Activated CD4-positive, alpha-beta T cell treated with anti-CD3 and anti-CD28 coated beads, Interleukin-2, amount 10 ng/mL, durations not matched to agents 24 days and 14 days (primary cell): ENCODE measurements at regions of chr2 and their contacts with region 1.

Region 1: GRCh38 chr2:224927646-224928173 is 114.6 kb downstream of the DOCK10 start:
- DNase-seq: peak; percentile 91
- H3K4me3 Mint-ChIP-seq: peak overlapping the region; percentile 67
- H3K27ac Mint-ChIP-seq: peak overlapping the region; percentile 100
- H3K4me1 Mint-ChIP-seq: peaks cover 85% of the 10 kb centered on the region
- H3K27me3 Mint-ChIP-seq: no peaks in the 10 kb centered on the region

Region 2: DNA sequence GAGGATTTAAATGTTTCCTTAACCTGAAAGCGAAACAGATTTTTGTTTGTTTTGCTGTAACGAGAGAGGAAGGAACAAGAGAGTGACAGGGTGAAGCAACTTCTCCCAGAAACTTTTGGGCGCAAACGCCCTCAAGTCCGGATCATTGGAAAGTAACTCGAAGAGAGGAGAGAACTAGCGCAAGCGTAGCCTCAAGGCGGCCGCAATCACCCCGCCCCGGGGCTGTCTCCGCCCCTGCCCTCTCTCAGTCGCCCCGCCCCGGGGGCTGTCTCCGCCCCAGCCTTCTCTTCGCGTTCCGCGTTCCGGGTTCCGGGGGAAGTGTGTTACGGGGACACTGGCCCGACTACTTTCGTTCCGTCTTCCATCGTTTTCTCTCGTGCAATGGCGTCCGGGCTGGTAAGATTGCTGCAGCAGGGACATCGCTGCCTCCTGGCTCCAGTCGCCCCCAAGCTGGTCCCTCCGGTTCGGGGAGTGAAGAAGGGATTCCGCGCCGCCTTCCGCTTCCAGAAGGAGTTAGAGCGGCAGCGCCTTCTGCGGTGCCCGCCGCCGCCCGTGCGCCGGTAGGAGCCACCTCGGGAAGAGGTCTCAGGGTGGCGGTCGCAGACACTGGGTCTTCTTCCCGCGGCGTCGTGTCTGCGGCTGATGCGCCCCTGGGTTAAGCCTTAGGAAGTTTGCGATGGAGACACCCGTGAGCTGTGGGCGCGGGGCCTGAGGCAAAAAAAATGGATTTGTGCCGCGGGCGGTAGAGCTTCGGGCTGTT is 970.4 kb before region 1 on chr2 and contains the start of gene MRPL44:
- intact Hi-C with region 1: loop called (anchors 5 kb)
- DNase-seq: peak; percentile 100
- H3K4me3 Mint-ChIP-seq: peak within 1 kb of the TSS; percentile 95
- H3K27ac Mint-ChIP-seq: peak within 1 kb of the TSS; percentile 95
- H3K4me1 Mint-ChIP-seq: peaks cover 62% of the 10 kb centered on the region
- H3K27me3 Mint-ChIP-seq: no peaks in the 10 kb centered on the region
- total RNA-seq, gene MRPL44: 37.3 and 37.4 TPM in 2 replicates

Region 3: DNA sequence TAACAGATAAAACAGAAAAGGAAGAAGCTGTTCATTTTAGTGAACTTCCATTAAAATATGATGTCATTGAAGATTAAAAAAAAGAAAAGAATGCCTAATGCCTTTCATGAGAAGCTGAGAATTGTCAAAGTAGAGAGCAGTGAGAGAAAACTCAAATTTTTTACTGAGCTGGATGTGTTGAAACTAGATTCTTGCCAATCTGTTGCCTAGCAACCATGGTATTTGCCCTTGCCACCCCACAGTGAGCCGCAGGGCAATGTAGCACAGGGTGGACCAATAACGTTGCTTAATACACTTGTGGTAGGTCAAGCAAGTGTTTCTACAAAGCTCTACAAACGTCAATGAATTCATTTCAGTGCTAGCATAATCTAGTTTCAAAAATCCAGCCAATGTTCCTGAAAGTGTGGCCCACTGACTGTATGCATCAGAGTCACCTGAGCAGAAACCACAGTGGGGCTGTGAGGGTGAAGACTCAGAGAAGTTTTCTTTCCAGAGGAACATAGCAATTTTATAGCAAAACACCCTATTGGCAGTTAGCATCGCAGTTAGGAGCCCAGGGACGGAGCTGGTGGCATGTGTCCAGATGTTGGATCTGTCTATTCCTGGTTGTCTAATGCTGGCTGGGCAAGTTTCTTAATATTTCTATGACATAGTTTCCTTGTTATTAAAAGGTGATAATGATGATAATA is 17.7 kb before region 1 on chr2:
- intact Hi-C with region 1: loop called (anchors 1 kb)
- DNase-seq: peak; percentile 58
- H3K4me3 Mint-ChIP-seq: no peak overlapping the region
- H3K27ac Mint-ChIP-seq: peak overlapping the region; percentile 80
- H3K4me1 Mint-ChIP-seq: peaks cover 46% of the 10 kb centered on the region
- H3K27me3 Mint-ChIP-seq: no peaks in the 10 kb centered on the region

Region 4: GRCh38 chr2:224946895-224947294 is 19.2 kb after region 1 on chr2:
- intact Hi-C with region 1: loop called (anchors 1 kb)
- DNase-seq: peak; percentile 79
- H3K4me3 Mint-ChIP-seq: peak overlapping the region; percentile 82
- H3K27ac Mint-ChIP-seq: peak overlapping the region; percentile 84
- H3K4me1 Mint-ChIP-seq: peaks cover 60% of the 10 kb centered on the region
- H3K27me3 Mint-ChIP-seq: no peaks in the 10 kb centered on the region

Region 5: DNA sequence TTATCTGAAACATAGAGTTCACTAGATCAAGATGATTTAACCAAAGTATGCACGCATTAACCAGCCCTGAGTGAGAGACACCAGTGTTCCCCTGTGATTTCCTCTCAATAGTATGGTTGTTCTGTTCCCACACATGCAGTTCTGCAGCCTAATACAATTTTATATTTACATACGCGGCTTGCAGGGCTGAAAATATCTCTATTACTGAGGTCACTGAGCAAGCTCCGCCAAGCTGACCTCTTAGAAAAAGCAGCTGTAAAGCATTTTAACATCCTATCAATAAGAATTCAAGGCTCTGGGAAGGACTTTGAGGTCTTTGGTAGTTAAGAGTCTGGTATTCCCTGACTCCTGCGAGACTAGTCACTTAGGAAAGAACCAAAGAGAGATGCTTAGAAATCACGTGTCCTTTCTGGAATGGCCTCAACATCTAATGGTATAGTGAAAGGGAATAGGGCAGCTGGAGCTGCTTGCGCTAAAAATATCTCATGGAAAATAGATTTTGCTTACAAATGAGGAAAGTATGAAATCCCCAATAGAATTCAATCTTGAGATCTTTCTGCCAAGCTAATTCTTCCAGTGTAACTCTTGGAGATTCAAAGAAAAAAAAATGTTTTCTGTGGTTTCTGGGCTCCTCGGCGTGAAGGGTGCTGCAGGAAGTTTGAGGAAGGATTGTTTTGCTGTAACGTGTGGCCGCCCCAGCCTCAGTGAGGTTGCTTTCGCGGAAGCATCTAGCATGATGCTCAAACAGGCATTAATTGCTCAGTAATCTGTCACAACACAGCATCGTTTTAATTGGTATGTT is 55.4 kb after region 1 on chr2:
- intact Hi-C with region 1: loop called (anchors 2 kb)
- DNase-seq: peak; percentile 86
- H3K4me3 Mint-ChIP-seq: peak overlapping the region; percentile 67
- H3K27ac Mint-ChIP-seq: peak overlapping the region; percentile 85
- H3K4me1 Mint-ChIP-seq: peaks cover 70% of the 10 kb centered on the region
- H3K27me3 Mint-ChIP-seq: no peaks in the 10 kb centered on the region

Region 6: DNA sequence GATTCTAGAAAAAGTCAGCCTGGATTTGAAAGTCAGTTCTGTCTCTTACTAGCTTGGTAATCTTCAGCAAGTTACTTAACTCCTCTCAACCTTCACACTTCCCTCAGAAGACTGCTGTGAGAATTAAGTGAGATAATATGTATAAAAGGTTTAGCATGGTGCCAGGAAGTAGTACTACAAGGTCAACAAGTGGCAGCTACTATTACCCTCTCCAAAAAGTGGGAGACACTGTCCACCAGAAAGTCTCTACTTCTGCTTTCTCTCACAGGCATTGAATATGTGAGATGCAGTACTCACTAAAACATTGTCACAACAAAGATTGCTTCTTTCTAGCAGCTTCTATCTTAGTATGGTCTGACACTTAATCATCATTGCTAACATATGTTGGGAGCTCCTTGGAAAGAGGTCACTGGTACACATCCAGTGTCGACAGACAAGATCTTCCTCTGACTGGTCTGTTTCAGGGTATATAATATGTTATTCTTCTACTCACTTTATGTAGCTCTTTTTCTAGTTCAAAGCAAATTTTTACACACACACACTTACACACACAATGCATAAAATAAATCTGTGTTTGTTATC is 66.6 kb after region 1 on chr2:
- intact Hi-C with region 1: no loop called
- DNase-seq: no peak
- H3K4me3 Mint-ChIP-seq: no peak overlapping the region
- H3K27ac Mint-ChIP-seq: no peak overlapping the region
- H3K4me1 Mint-ChIP-seq: peaks cover 54% of the 10 kb centered on the region
- H3K27me3 Mint-ChIP-seq: no peaks in the 10 kb centered on the region

Region 7: GRCh38 chr2:225041851-225042799 is 114.4 kb after region 1 on chr2 and contains the start of gene DOCK10:
- intact Hi-C with region 1: loop called (anchors 1 kb)
- DNase-seq: peak; percentile 87
- H3K4me3 Mint-ChIP-seq: peak within 1 kb of the TSS; percentile 94
- H3K27ac Mint-ChIP-seq: peak within 1 kb of the TSS; percentile 98
- H3K4me1 Mint-ChIP-seq: peaks cover 49% of the 10 kb centered on the region
- H3K27me3 Mint-ChIP-seq: peaks cover 31% of the 10 kb centered on the region
- total RNA-seq, gene DOCK10: 137 and 138 TPM in 2 replicates